ENCODE measurements at regions of chr12 and their contacts with region 1.

Region 1: DNA sequence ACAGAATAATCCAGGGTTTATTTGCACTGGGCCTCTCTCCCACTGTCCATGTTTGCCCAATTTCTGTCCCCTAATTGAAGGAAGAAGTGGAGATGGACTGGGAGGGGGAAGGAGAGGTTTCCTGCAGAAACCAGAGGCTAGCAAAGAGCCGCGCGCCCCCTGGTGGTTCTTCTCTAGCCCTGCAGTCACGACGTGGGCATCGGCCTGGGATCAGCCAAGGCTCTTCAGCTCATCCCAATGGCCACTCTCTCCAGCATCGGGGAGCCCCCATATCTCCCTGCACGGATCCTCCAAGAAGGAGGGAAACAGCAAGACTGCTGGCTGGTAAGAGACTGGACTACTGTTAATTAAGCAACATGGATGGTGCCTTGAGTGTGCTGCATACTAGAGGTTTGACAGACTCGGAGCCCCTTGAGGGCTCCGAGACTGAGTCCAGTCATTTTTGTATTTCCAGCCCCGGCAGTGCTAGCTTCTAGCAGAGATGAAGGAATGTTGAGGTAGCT is 18.7 kb downstream of the ZBTB39 start:
- H3K4me3 ChIP-seq: no peak overlapping the region
- H3K27ac ChIP-seq: no peak overlapping the region
- H3K4me1 ChIP-seq: no peaks in the 10 kb centered on the region
- CTCF ChIP-seq: peak; percentile 87

Region 2: GRCh38 chr12:56751712-56752598 is 235.6 kb before region 1 on chr12 and contains the start of gene PRIM1:
- CTCF ChIA-PET with region 1: interaction called, 63 read pairs
- POLR2A ChIA-PET with region 1: no interaction called
- H3K4me3 ChIP-seq: peak within 1 kb of the TSS; percentile 83
- H3K27ac ChIP-seq: peak within 1 kb of the TSS; percentile 80
- H3K4me1 ChIP-seq: peaks cover 6% of the 10 kb centered on the region
- CTCF ChIP-seq: 0 out of 2 replicates have a peak, but pooled peaks have one; percentile 12

Region 3: GRCh38 chr12:56763753-56764657 is 223.6 kb before region 1 on chr12:
- CTCF ChIA-PET with region 1: interaction called, 63 read pairs
- POLR2A ChIA-PET with region 1: interaction called, 6 read pairs
- H3K4me3 ChIP-seq: no peak overlapping the region
- H3K27ac ChIP-seq: no peak overlapping the region
- H3K4me1 ChIP-seq: no peaks in the 10 kb centered on the region
- CTCF ChIP-seq: no peak

Region 4: DNA sequence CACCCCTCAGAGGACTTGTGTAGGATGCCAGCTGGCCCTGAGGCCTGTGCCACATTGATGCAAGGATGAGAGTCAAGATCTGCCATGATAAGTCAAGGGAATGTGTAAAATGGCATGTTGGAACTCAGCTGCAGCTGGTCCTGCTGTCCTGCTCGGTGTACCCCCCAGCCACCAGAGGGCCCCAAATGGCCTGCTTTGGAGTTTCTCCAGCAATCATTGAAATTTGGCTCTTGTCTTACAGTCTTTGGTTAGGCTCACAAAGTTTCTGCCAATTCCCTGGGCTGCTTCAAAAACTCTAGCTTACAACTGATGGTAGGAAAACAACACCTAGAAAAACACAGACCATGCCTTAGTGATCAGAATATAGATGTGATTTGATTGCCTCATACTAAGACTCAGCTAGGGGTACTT is 147.7 kb before region 1 on chr12:
- CTCF ChIA-PET with region 1: interaction called, 25 read pairs
- POLR2A ChIA-PET with region 1: no interaction called
- H3K4me3 ChIP-seq: no peak overlapping the region
- H3K27ac ChIP-seq: no peak overlapping the region
- H3K4me1 ChIP-seq: no peaks in the 10 kb centered on the region
- CTCF ChIP-seq: peak; percentile 82

Region 5: DNA sequence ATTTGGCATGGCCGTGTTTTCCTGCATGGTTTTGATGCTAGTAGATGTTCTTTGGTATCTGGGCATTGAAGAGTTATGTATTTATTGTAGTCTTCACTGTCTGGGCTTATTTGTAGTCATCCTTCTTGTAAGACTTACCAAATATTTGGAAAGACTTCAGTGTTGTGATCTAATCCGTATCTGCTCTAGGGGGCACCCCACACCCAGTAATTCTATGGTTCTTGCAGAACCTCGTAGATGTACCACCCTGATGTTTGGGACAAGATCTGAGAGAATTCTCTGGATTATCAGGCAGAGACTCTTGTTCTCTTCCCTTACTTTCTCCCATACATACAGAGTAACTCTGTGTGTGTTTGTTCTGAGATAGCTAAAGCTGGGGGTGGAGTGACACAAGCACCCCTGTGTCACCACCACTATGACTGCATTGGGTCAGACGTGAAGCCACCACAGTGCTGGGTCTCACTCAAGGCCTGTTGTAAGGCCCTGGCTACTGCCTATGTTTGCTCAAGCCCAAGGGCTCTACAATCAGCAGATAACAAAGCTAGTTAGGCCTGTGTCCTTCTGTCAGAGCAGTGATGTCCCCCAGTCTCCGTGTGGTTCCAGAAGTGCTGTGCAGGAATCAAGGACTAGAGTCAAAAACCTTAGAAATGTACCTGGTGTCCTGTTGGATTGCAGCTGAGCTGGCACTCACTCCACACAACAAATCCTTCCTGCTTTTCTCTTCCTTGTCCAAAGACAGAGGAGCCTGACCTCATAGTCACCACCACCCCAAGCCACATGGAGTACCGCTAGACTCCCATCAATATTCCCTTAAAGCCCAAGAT is 39.8 kb before region 1 on chr12:
- CTCF ChIA-PET with region 1: interaction called, 15 read pairs
- POLR2A ChIA-PET with region 1: no interaction called
- H3K4me3 ChIP-seq: no peak overlapping the region
- H3K27ac ChIP-seq: no peak overlapping the region
- H3K4me1 ChIP-seq: no peaks in the 10 kb centered on the region
- CTCF ChIP-seq: no peak

Measured in HEK293 (cell line).